ENCODE measurements at regions of chr19 and their contacts with region 1.

Region 1: DNA sequence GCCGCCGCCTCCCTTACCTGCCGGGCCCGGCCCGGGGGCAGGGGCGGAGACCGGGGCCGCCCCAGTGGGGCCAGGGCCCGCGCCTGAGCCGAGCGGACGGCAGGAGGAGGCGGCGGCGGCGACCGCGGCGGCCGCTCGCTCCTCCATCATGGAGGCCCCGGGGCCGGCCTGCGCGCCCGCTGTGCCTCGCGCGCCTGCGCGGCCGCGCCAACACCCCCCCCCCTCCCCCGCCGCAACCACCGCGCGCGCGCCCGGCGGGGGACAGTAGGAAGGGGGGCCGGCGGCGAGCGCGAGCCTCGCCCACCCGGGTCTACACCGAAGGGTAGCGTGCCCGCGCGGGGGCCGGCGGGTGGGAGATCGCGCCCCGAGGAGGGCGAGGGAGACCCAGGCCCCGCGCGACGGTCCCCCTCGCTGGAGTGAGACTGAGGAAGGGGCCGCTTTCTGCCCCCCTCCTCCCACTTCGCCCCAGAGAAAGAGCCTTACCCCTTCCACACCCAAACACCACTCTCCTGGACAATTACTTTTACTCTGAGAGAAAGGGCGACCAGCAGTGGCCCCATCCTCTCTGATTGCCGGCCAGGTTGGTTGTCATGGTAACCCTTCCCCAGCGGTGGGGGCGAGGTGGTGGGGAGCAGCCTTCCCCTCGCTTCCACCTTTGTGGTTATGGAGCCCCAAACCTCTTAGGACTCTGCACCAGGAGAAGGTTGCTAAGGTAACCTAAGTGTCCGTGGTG is at the start of gene STRN4:
- DNase-seq: peak; percentile 63
- ATAC-seq: peak; percentile 81
- H3K4me3 Mint-ChIP-seq: peak within 1 kb of the TSS; percentile 91
- H3K27ac Mint-ChIP-seq: peak within 1 kb of the TSS; percentile 88
- H3K4me1 Mint-ChIP-seq: peaks cover 47% of the 10 kb centered on the region
- H3K27me3 Mint-ChIP-seq: no peaks in the 10 kb centered on the region
- CTCF ChIP-seq: no peak
- total RNA-seq, gene STRN4: 52.5 to 63.5 TPM

Region 2: GRCh38 chr19:46717034-46717723 is 29.3 kb before region 1 on chr19 and contains the start of gene PRKD2:
- CTCF ChIA-PET with region 1: interaction called, 4 read pairs
- POLR2A ChIA-PET with region 1: interaction called, 13 read pairs
- intact Hi-C with region 1: no loop called
- DNase-seq: peak; percentile 92
- ATAC-seq: peak; percentile 62
- H3K4me3 Mint-ChIP-seq: peak within 1 kb of the TSS; percentile 86
- H3K27ac Mint-ChIP-seq: peak within 1 kb of the TSS; percentile 94
- H3K4me1 Mint-ChIP-seq: peaks cover 38% of the 10 kb centered on the region
- H3K27me3 Mint-ChIP-seq: no peaks in the 10 kb centered on the region
- CTCF ChIP-seq: no peak
- total RNA-seq, gene PRKD2: 81.1 to 86.0 TPM

Region 3: DNA sequence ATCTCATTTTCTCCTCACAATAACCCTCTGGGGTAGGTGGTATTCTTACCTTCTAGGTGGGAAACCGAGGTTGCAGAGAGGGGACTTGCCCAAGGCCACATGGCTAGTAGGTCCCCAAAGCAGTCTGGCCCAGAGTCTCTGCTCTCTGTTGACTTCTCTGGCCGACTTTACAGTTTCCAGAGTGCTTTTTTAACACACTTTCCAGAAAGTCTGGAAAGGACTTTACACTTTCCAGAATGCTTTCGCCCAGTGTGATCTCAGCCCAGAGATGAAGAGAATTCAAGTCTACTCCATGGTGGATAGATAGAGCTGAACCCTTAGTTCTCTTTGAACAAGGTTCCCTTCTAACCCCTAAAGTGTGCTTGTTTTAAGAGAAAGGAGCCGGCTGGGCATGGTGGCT is 126.5 kb after region 1 on chr19:
- CTCF ChIA-PET with region 1: no interaction called
- POLR2A ChIA-PET with region 1: no interaction called
- intact Hi-C with region 1: no loop called
- DNase-seq: no peak
- ATAC-seq: no peak
- H3K4me3 Mint-ChIP-seq: no peak overlapping the region
- H3K27ac Mint-ChIP-seq: no peak overlapping the region
- H3K4me1 Mint-ChIP-seq: peaks cover 10% of the 10 kb centered on the region
- H3K27me3 Mint-ChIP-seq: no peaks in the 10 kb centered on the region
- CTCF ChIP-seq: no peak

Measured in activated CD8-positive, alpha-beta T cell treated with anti-CD3 and anti-CD28 coated beads for 36 hours (primary cell).